ENCODE measurements at regions of chr20 and their contacts with region 1.

Region 1: DNA sequence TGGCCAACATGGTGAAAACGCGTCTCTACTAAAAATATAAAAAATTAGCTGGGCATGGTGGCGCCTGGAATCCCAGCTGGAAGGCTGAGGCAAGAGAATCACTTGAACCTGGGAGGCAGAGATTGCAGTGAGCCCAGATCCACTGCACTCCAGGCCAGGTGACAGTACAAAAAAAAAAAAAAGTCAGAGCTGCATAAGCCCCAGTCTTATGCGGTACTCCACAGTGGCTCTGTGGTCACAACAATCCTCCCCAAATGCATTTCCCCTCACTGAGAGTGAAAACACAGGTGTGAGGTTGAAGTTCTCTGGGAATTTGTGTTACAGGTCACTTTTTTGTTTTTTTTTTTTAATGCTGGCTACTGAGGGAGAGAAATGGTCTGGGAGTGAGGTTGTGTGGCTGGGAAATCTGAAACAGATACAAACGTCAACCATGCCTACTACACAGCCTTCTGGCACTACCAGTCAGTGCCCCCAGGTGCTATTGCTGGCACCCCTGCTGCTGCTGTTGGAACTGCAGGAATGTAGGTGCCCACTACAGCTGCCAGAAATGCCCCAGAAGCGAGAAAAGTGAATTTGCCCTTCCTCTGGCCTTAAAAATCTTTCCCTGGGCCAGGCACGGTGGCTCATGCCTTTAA is 5.7 kb downstream of the MRPS26 start:
- DNase-seq: no peak
- ATAC-seq: no peak
- H3K4me3 ChIP-seq: no peak overlapping the region
- H3K27ac ChIP-seq: no peak overlapping the region
- H3K4me1 ChIP-seq: peaks cover 2 to 16% of the 10 kb centered on the region in 2 donors
- H3K27me3 ChIP-seq: no peaks in the 10 kb centered on the region
- CTCF ChIP-seq: no peak

Region 2: DNA sequence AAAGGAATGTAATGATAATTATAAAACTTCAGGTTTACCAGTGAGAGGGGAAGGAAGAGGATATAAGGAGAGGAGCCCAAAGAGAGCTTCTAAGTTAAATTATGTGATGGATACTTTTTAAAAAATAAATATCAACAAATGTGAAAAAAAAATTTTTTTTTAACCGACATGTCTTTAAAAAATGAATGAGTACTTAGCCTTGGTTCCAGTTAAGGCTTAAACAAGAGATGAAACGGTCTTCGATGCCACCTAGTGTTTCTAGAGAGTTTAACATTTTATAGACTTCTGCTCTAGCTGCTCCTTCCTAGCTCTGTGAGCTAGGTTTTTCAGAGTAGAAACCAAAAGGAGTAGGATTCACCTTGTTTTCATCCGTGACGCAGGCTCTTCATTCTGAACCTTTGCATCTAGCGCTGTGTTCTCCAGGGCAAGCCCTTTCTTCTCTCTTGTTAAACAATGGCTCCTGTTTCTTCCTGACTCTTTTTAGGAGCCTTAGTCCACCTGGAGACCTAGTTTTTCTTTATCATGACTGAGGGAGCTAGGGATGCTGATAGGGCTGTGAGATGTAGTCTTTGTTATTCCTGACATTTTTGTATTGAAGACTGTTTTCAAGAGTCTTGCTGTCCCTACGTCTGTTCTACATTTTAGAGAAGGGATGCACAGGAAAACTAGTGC is 50.5 kb before region 1 on chr20:
- intact Hi-C with region 1: no loop called
- DNase-seq: peak in 2 of 4 donors; percentile 44 to 74
- ATAC-seq: peak; percentile 77
- H3K4me3 ChIP-seq: no peak overlapping the region
- H3K27ac ChIP-seq: no peak overlapping the region
- H3K4me1 ChIP-seq: no peaks in the 10 kb centered on the region
- H3K27me3 ChIP-seq: no peaks in the 10 kb centered on the region
- CTCF ChIP-seq: peak; percentile 15 to 21

Region 3: GRCh38 chr20:3115190-3116107 is 63.9 kb after region 1 on chr20:
- intact Hi-C with region 1: loop called in 1 of 2 experiments (anchors 10 kb)
- DNase-seq: peak in 2 of 4 donors; percentile 35 to 53
- ATAC-seq: peak; percentile 69
- H3K4me3 ChIP-seq: no peak overlapping the region
- H3K27ac ChIP-seq: no peak overlapping the region
- H3K4me1 ChIP-seq: peaks cover 2 to 29% of the 10 kb centered on the region in 2 donors
- H3K27me3 ChIP-seq: no peaks in the 10 kb centered on the region
- CTCF ChIP-seq: peak; percentile 52 to 73

Region 4: DNA sequence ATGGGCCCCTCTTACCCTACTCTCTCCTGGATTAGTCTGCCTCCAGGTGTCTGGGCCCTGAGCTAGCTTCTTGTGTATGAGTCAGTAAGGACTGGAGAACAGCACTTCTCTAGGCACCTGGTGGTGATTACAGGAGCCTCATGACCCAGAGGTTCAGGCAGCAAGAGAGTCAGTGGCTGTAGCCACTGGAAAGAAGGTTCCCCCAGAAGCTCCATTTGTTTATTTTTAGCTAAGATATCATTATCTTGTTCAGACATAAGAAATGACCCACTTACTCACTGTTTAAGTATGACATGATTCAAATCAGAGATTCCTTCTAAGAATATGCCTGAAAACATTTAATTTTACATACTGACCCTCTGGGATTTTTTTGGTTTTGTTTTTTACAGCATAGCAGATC is 211.1 kb after region 1 on chr20:
- intact Hi-C with region 1: no loop called
- DNase-seq: no peak
- ATAC-seq: no peak
- H3K4me3 ChIP-seq: no peak overlapping the region
- H3K27ac ChIP-seq: no peak overlapping the region
- H3K4me1 ChIP-seq: no peaks in the 10 kb centered on the region
- H3K27me3 ChIP-seq: no peaks in the 10 kb centered on the region
- CTCF ChIP-seq: no peak

Region 5: GRCh38 chr20:3282271-3283221 is 231.0 kb after region 1 on chr20:
- intact Hi-C with region 1: no loop called
- DNase-seq: peak in 1 of 4 donors; percentile 13
- ATAC-seq: peak; percentile 78
- H3K4me3 ChIP-seq: no peak overlapping the region
- H3K27ac ChIP-seq: no peak overlapping the region
- H3K4me1 ChIP-seq: no peaks in the 10 kb centered on the region
- H3K27me3 ChIP-seq: no peaks in the 10 kb centered on the region
- CTCF ChIP-seq: no peak

Measured in left lung (tissue), 14 donors.